Heart right ventricle (tissue), 16 donors: ENCODE measurements at regions of chr5 and their contacts with region 1.

Region 1: GRCh38 chr5:119745976-119746375 is 116.6 kb downstream of the FAM170A start:
- DNase-seq: no peak
- ATAC-seq: no peak
- H3K4me3 ChIP-seq: no peak overlapping the region
- H3K27ac ChIP-seq: no peak overlapping the region
- H3K4me1 ChIP-seq: no peaks in the 10 kb centered on the region
- H3K27me3 ChIP-seq: no peaks in the 10 kb centered on the region
- CTCF ChIP-seq: no peak

Region 2: GRCh38 chr5:119651486-119651885 is 94.5 kb before region 1 on chr5:
- intact Hi-C with region 1: loop called in 1 of 10 experiments (anchors 1 kb)
- DNase-seq: no peak
- ATAC-seq: no peak
- H3K4me3 ChIP-seq: no peak overlapping the region
- H3K27ac ChIP-seq: no peak overlapping the region
- H3K4me1 ChIP-seq: peaks cover 0 to 3% (median 0%) of the 10 kb centered on the region in 9 donors
- H3K27me3 ChIP-seq: peaks cover 0 to 4% (median 0%) of the 10 kb centered on the region in 7 donors
- CTCF ChIP-seq: no peak

Region 3: GRCh38 chr5:119789406-119790117 is 43.6 kb after region 1 on chr5:
- intact Hi-C with region 1: no loop called
- DNase-seq: no peak
- ATAC-seq: no peak
- H3K4me3 ChIP-seq: no peak overlapping the region
- H3K27ac ChIP-seq: no peak overlapping the region
- H3K4me1 ChIP-seq: peaks cover 0 to 8% (median 0%) of the 10 kb centered on the region in 9 donors
- H3K27me3 ChIP-seq: no peaks in the 10 kb centered on the region
- CTCF ChIP-seq: no peak